Natural killer cell (primary cell): ENCODE measurements at regions of chr12 and their contacts with region 1.

Region 1: DNA sequence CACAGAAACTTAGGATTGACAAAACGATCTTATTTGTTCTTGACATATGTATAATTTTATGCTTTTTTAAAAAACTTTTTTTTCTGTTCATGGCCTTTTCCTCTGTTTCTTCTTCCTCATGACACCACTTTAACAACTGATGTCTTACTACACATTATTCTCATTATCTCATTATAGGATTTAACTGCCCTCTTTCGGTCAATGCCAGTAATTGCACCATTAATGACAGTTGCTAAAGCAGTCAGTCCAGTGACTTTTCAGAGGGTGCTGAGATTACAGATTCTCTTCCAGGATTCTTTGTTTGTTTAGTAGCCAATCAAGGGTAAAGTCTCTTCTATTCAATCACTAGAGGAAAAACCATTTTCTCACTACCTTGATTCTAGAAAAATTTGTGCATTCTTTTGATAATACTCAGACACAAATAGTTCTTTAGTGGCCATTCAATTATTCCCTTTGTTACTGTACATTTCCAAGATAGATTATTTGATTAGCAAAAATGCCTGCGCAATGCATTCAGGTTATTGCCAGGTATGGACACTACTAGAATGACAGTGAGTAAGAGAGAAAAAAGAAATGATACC is 50.1 kb downstream of the KLRG1 start:
- DNase-seq: peak in 1 of 2 donors; percentile 78
- ATAC-seq: peak; percentile 86 to 99 (median 86)
- H3K4me3 ChIP-seq: no peak overlapping the region
- H3K4me3 Mint-ChIP-seq: peak overlapping the region; percentile 65
- H3K27ac ChIP-seq: no peak overlapping the region
- H3K27ac Mint-ChIP-seq: peak overlapping the region; percentile 4 to 88
- H3K4me1 ChIP-seq: peaks cover 16% of the 10 kb centered on the region
- H3K4me1 Mint-ChIP-seq: peaks cover 22 to 49% of the 10 kb centered on the region in 2 donors
- H3K27me3 ChIP-seq: no peaks in the 10 kb centered on the region
- H3K27me3 Mint-ChIP-seq: no peaks in the 10 kb centered on the region
- CTCF ChIP-seq: peak; percentile 90

Region 2: GRCh38 chr12:8890313-8891085 is 149.0 kb before region 1 on chr12:
- intact Hi-C with region 1: loop called (anchors 2 kb)
- DNase-seq: peak; percentile 39 to 82
- ATAC-seq: peak; percentile 81 to 87 (median 87)
- H3K4me3 ChIP-seq: peak overlapping the region; percentile 49
- H3K4me3 Mint-ChIP-seq: peak overlapping the region; percentile 90
- H3K27ac ChIP-seq: no peak overlapping the region
- H3K27ac Mint-ChIP-seq: peak overlapping the region in 1 of 2 donors; percentile 88
- H3K4me1 ChIP-seq: peaks cover 3% of the 10 kb centered on the region
- H3K4me1 Mint-ChIP-seq: peaks cover 0 to 5% of the 10 kb centered on the region in 2 donors
- H3K27me3 ChIP-seq: no peaks in the 10 kb centered on the region
- H3K27me3 Mint-ChIP-seq: peaks cover 0 to 3% of the 10 kb centered on the region in 2 donors
- CTCF ChIP-seq: peak; percentile 96

Region 3: DNA sequence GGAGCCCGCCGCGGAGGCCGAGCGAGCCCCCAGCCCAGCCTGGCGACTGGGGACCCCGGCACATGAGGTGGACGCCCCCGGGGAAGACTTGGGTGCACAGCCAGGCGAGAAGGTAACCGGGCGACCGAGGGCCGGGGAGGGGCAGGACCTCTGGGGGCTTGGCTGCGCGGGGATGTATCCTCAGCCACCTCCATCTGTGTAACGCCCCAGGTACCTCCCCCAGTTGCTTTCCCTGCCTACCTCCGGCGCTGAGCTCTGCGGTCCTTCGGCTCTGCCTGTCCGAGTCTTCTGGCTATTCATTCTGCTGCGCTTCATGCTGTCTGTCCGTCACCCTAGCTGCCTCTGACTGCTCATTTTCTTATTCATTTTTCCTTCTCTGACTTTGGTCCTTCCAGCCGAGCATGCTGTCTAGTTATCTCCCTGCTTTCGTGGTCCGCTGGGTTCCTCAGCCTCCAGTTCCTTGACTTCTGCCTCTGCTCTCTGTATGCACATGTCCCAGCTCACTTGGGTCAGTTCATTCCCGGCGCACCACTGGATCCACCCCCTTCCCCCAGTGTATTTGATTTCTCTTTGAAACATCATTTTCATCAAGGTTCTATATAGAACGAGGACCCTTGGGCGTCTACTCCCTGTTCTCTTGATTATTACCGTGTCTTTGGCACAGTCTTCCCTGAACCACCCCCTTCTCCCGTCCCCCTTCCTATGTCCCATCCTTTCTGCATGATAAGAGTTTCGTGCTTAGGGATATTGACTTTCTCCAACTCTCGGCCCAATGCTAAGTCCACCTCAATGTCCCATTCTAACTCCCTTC is 124.6 kb before region 1 on chr12:
- intact Hi-C with region 1: loop called (anchors 2 kb)
- DNase-seq: peak; percentile 45 to 77
- ATAC-seq: peak; percentile 75 to 78 (median 77)
- H3K4me3 ChIP-seq: peak overlapping the region; percentile 60
- H3K4me3 Mint-ChIP-seq: no peak overlapping the region
- H3K27ac ChIP-seq: peak overlapping the region; percentile 45
- H3K27ac Mint-ChIP-seq: no peak overlapping the region
- H3K4me1 ChIP-seq: peaks cover 10% of the 10 kb centered on the region
- H3K4me1 Mint-ChIP-seq: peaks cover 13 to 14% of the 10 kb centered on the region in 2 donors
- H3K27me3 ChIP-seq: no peaks in the 10 kb centered on the region
- H3K27me3 Mint-ChIP-seq: no peaks in the 10 kb centered on the region
- CTCF ChIP-seq: no peak

Region 4: GRCh38 chr12:8989413-8989812 is 50.1 kb before region 1 on chr12 and contains the start of gene KLRG1:
- intact Hi-C with region 1: loop called (anchors 2 kb)
- DNase-seq: peak in 1 of 2 donors; percentile 43
- ATAC-seq: peak; percentile 53 to 75 (median 62)
- H3K4me3 ChIP-seq: peak within 1 kb of the TSS; percentile 52
- H3K4me3 Mint-ChIP-seq: peak within 1 kb of the TSS; percentile 94
- H3K27ac ChIP-seq: peak within 1 kb of the TSS; percentile 92
- H3K27ac Mint-ChIP-seq: peak within 1 kb of the TSS; percentile 90 to 96
- H3K4me1 ChIP-seq: peaks cover 45% of the 10 kb centered on the region
- H3K4me1 Mint-ChIP-seq: peaks cover 68 to 71% of the 10 kb centered on the region in 2 donors
- H3K27me3 ChIP-seq: no peaks in the 10 kb centered on the region
- H3K27me3 Mint-ChIP-seq: no peaks in the 10 kb centered on the region
- CTCF ChIP-seq: no peak
- total RNA-seq, gene KLRG1: 76.3 to 165 (median 86.2) TPM

Region 5: GRCh38 chr12:9001233-9001632 is 38.3 kb before region 1 on chr12:
- intact Hi-C with region 1: no loop called
- DNase-seq: no peak
- ATAC-seq: no peak
- H3K4me3 ChIP-seq: no peak overlapping the region
- H3K4me3 Mint-ChIP-seq: peak overlapping the region; percentile 71
- H3K27ac ChIP-seq: peak overlapping the region; percentile 49
- H3K27ac Mint-ChIP-seq: peak overlapping the region; percentile 87 to 90
- H3K4me1 ChIP-seq: peaks cover 48% of the 10 kb centered on the region
- H3K4me1 Mint-ChIP-seq: peaks cover 64 to 66% of the 10 kb centered on the region in 2 donors
- H3K27me3 ChIP-seq: no peaks in the 10 kb centered on the region
- H3K27me3 Mint-ChIP-seq: no peaks in the 10 kb centered on the region
- CTCF ChIP-seq: no peak